ENCODE measurements at regions of chr17 and their contacts with region 1.

Region 1: GRCh38 chr17:40615295-40615988 is 32.2 kb downstream of the SMARCE1 start:
- DNase-seq: peak; percentile 29 to 39 (median 35)
- H3K4me3 ChIP-seq: no peak overlapping the region
- H3K27ac ChIP-seq: no peak overlapping the region
- H3K4me1 ChIP-seq: peaks cover 0 to 15% (median 9%) of the 10 kb centered on the region in 4 experiments
- H3K27me3 ChIP-seq: peaks cover 0 to 6% (median 0%) of the 10 kb centered on the region in 5 experiments

Region 2: DNA sequence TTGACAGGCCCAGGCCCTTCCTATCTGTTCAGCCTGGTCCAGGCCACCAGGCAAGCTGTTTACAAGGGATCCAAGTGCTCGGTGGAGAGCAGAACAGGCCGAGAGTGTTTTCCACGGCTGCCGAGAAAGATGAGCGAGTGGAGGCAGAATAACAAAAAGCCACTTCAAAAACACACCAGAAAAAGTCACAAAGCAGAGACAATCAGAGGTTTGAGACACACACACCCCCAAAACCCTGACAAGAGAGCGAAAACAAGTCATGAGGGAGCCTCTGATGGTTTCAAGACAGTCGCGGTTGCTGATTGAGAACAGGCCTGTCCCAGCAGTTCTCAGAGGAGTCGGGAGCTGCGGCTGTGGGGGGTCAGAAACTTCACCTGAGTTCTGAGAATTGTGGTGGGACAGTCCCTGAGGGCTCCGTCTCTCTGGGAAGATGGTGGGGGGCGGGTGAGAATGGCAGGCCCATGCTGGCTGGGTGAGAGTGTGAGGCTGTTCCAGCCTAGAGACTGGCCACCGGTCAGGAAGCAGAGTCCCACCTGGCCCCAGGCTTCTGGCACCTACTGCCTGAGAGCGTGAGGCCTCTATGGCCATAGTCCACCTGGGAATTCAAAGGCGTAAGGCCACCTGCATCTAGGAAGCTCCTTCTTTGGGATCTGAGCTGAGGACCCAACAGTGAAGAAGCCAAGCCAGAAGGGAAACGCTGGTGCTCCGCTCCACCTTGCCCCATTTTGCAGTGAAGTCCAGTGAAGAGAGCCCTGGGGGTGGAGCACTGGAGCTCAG is 12.5 kb before region 1 on chr17:
- CTCF ChIA-PET with region 1: interaction called, 19 read pairs
- POLR2A ChIA-PET with region 1: no interaction called
- DNase-seq: no peak
- H3K4me3 ChIP-seq: no peak overlapping the region
- H3K27ac ChIP-seq: no peak overlapping the region
- H3K4me1 ChIP-seq: peaks cover 0 to 21% (median 11%) of the 10 kb centered on the region in 4 experiments
- H3K27me3 ChIP-seq: no peaks in the 10 kb centered on the region

Region 3: GRCh38 chr17:40647624-40648383 is 32.4 kb after region 1 on chr17 and contains the start of gene SMARCE1:
- CTCF ChIA-PET with region 1: no interaction called
- POLR2A ChIA-PET with region 1: no interaction called
- DNase-seq: peak; percentile 82 to 88 (median 84)
- H3K4me3 ChIP-seq: peak within 1 kb of the TSS; percentile 64 to 98 (median 91)
- H3K27ac ChIP-seq: peak within 1 kb of the TSS; percentile 100
- H3K4me1 ChIP-seq: peaks cover 7 to 28% (median 18%) of the 10 kb centered on the region in 4 experiments
- H3K27me3 ChIP-seq: no peaks in the 10 kb centered on the region

Region 4: GRCh38 chr17:40658396-40658795 is 43.0 kb after region 1 on chr17:
- CTCF ChIA-PET with region 1: no interaction called
- POLR2A ChIA-PET with region 1: no interaction called
- DNase-seq: no peak
- H3K4me3 ChIP-seq: no peak overlapping the region
- H3K27ac ChIP-seq: no peak overlapping the region
- H3K4me1 ChIP-seq: no peaks in the 10 kb centered on the region
- H3K27me3 ChIP-seq: peaks cover 5 to 23% (median 15%) of the 10 kb centered on the region in 5 experiments

Region 5: DNA sequence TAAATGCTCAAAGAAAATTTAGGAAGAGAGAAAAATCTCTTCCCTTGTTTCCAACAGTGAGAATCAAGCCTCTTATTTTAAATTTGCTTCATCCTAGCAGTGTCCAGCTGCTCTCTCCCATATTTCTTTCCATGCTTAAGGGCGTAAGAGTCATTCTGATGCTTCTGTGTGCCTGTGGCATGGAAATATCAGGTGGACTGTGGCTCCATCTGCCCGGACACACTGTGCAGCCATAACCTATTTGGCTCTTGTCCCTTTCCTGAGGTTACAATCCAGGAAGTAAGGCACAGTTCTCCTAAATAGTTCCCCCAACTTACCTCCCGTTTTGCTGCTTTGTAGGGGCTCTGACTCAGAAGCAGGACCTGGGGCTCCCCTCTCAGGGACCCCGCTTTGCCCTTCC is 55.8 kb after region 1 on chr17:
- CTCF ChIA-PET with region 1: no interaction called
- POLR2A ChIA-PET with region 1: no interaction called
- DNase-seq: no peak
- H3K4me3 ChIP-seq: no peak overlapping the region
- H3K27ac ChIP-seq: no peak overlapping the region
- H3K4me1 ChIP-seq: no peaks in the 10 kb centered on the region
- H3K27me3 ChIP-seq: peaks cover 7 to 41% (median 22%) of the 10 kb centered on the region in 5 experiments

Region 6: GRCh38 chr17:40714473-40714872 is 99.0 kb after region 1 on chr17:
- CTCF ChIA-PET with region 1: no interaction called
- POLR2A ChIA-PET with region 1: no interaction called
- DNase-seq: no peak
- H3K4me3 ChIP-seq: no peak overlapping the region
- H3K27ac ChIP-seq: no peak overlapping the region
- H3K4me1 ChIP-seq: no peaks in the 10 kb centered on the region
- H3K27me3 ChIP-seq: peaks cover 3 to 36% (median 6%) of the 10 kb centered on the region in 5 experiments

Measured in common myeloid progenitor, CD34-positive (primary cell).